ENCODE measurements at regions of chrX and their contacts with region 1.

Region 1: DNA sequence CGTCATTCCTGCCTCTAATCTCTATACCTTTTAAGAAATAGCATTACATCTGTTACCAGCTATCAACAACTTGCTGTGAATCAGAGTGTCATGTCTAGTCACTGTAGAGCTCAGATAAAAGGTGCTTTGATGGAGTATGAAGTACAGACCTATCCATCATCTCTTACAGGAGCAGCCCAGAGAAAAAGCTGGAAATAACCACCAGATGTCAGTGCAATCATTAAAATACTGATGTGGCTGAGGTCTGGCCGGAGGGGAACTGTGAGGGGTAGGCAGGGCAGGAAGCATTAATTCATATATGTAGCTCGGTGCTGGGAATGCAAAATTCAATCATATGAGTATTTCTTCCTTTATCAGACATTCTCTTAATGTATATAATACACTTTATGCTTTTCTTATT is 100.6 kb downstream of the AKAP4 start:
- DNase-seq: no peak
- ATAC-seq: peak; percentile 69
- H3K4me3 ChIP-seq: no peak overlapping the region
- H3K27ac ChIP-seq: no peak overlapping the region
- H3K4me1 ChIP-seq: no peaks in the 10 kb centered on the region
- H3K27me3 ChIP-seq: no peaks in the 10 kb centered on the region
- CTCF ChIP-seq: peak; percentile 20 to 53 (median 35); a peak in 3 of 6 replicates
- POLR2A ChIP-seq: no peak
- RAD21 ChIP-seq: peak; percentile 68

Region 2: GRCh38 chrX:50001751-50002714 is 98.2 kb before region 1 on chrX:
- CTCF ChIA-PET with region 1: no interaction called
- POLR2A ChIA-PET with region 1: no interaction called
- RAD21 ChIA-PET with region 1: no interaction called
- intact Hi-C with region 1: no loop called
- DNase-seq: no peak
- ATAC-seq: no peak
- H3K4me3 ChIP-seq: no peak overlapping the region
- H3K27ac ChIP-seq: no peak overlapping the region
- H3K4me1 ChIP-seq: peaks cover 0 to under 1% of the 10 kb centered on the region in 2 experiments; a peak in 1 of 4 replicates
- H3K27me3 ChIP-seq: no peaks in the 10 kb centered on the region
- CTCF ChIP-seq: no peak
- POLR2A ChIP-seq: no peak
- RAD21 ChIP-seq: no peak

Region 3: GRCh38 chrX:50448565-50448964 is 348.4 kb after region 1 on chrX:
- CTCF ChIA-PET with region 1: interaction called, 7 read pairs
- POLR2A ChIA-PET with region 1: no interaction called
- RAD21 ChIA-PET with region 1: no interaction called
- intact Hi-C with region 1: loop called (anchors 1 kb)
- DNase-seq: peak; percentile 69
- ATAC-seq: peak; percentile 91
- H3K4me3 ChIP-seq: no peak overlapping the region
- H3K27ac ChIP-seq: no peak overlapping the region
- H3K4me1 ChIP-seq: peaks cover 0 to 5% of the 10 kb centered on the region in 2 experiments; a peak in 1 of 4 replicates
- H3K27me3 ChIP-seq: no peaks in the 10 kb centered on the region; the same call in 1 of the 2 replicates
- CTCF ChIP-seq: peak; percentile 40 to 58 (median 58); a peak in 5 of 6 replicates
- POLR2A ChIP-seq: no peak
- RAD21 ChIP-seq: peak; percentile 62

Region 4: GRCh38 chrX:50579955-50580354 is 479.8 kb after region 1 on chrX:
- CTCF ChIA-PET with region 1: interaction called, 19 read pairs
- POLR2A ChIA-PET with region 1: no interaction called
- RAD21 ChIA-PET with region 1: interaction called, 3 read pairs
- intact Hi-C with region 1: loop called (anchors 1 kb)
- DNase-seq: peak; percentile 59
- ATAC-seq: peak; percentile 88
- H3K4me3 ChIP-seq: no peak overlapping the region
- H3K27ac ChIP-seq: no peak overlapping the region
- H3K4me1 ChIP-seq: no peaks in the 10 kb centered on the region
- H3K27me3 ChIP-seq: peaks cover 3% of the 10 kb centered on the region; the same call in 1 of the 2 replicates
- CTCF ChIP-seq: peak; percentile 23 to 55 (median 33); a peak in 4 of 6 replicates
- POLR2A ChIP-seq: no peak
- RAD21 ChIP-seq: peak; percentile 56